Stomach (tissue), 19 donors: ENCODE measurements at regions of chr14 and their contacts with region 1.

Region 1: DNA sequence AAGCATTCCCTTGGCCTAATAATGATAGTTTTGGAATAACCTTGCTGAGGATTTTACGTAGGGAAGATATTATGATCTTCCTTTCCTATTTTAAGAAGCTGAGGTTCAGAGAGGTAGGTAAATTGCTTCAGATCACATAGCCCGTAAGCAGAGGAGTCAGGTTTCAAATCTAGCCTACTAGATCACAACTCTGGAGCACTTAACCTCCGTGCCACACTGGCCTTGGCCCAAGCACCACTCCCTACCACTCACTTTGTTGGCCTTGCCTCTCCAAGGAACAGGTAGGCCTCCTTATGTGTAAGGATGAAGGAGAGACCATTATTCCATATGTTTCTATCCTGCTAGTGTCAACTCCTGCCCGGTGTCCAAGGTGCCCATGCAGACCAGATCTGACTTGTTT is 12.4 kb upstream of the ACOT1 start:
- DNase-seq: peak in 1 of 2 donors; percentile 48
- H3K4me3 ChIP-seq: no peak overlapping the region
- H3K27ac ChIP-seq: no peak overlapping the region
- H3K4me1 ChIP-seq: peaks cover 8 to 24% (median 9%) of the 10 kb centered on the region in 4 donors
- H3K27me3 ChIP-seq: no peaks in the 10 kb centered on the region
- CTCF ChIP-seq: no peak
- EP300 ChIP-seq: no peak
- POLR2A ChIP-seq: no peak

Region 2: DNA sequence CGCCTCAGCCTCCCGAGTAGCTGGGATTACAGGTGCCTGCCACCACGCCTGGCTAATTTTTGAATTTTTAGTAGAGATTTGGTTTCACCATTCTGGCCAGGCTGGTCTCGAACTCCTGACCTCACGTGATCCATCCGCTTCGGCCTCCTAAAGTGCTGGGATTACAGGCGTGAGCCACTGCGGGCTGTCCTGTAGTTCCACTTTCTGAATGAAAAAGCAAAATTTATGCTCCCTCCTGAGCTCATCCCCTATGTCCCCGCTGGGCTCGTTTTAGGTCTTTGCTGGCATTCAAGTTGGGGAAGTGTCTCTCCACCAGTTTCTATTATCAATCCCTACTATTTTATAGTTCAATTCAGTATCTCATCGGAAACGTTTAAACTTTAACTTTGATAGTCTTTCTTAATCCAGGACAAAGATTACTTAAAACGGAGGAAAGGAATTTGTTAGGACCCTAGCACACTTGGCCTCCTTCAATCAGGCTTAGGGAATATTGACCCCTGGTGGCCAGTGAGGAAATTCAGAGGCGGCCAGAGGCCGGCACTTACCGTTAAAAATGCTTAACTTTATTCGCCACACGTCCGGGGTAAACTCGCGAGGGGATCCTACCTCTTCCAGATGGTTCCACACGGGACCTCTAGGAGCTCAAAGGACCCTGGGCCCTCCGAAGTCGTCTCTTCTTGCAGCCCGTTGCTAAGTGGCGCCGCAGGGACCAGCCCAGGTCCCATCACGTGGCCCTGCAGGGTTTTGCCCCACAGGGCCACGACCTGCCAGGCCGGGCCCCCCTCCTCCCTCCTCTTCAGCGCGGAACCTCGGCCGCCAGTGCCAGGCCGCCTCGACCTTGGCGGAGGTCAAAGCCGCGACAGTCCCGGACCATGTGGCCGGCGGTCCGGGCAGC is 108.9 kb after region 1 on chr14:
- intact Hi-C with region 1: loop called (anchors 10 kb)
- DNase-seq: peak; percentile 59 to 87
- H3K4me3 ChIP-seq: peak overlapping the region; percentile 54 to 81 (median 58)
- H3K27ac ChIP-seq: peak overlapping the region in 4 of 5 donors; percentile 35 to 62 (median 46)
- H3K4me1 ChIP-seq: peaks cover 0 to 20% (median 17%) of the 10 kb centered on the region in 4 donors
- H3K27me3 ChIP-seq: no peaks in the 10 kb centered on the region
- CTCF ChIP-seq: peak in 5 of 7 experiments; percentile 49 to 88 (median 85)
- EP300 ChIP-seq: no peak
- POLR2A ChIP-seq: no peak